Left cardiac atrium (tissue), 4 donors: ENCODE measurements at regions of chr16 and their contacts with region 1.

Region 1: GRCh38 chr16:84084570-84085270 is 32.0 kb downstream of the MBTPS1 start:
- DNase-seq: peak; percentile 50
- ATAC-seq: peak; percentile 30 to 39

Region 2: DNA sequence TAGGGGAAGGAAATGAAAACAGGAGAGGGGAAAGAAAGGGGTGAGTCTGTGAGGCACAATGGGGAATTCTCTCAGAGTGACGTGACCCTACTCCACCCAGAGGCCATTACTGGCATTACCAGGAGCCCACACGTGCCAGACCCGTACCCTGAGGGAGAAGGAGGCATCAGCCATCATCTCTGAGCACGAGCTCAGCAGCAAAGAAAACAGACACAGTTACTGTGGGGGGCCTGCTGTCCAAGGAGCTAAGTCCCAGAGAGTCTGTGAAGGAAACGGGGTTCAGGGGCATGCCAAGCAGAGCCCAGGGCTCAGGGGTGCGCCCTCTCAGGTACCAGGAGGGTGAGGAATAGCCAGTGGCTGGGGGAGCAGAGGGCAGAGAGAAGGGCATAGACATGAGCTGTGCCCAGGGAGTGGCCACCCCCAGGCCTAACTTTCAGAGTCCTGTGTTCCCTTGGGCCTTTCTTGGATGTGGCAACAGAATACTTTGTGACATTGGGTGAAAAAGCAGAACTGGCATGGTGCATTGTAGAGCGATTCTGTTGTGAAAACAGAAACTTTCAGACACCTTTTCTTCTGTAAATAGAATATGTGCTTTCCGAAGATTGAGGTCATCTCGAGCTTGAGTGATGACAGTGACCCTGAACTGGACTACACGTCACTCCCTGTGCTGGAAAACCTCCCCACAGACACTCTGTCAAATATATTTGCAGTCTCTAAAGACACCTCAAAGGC is 90.8 kb after region 1 on chr16:
- intact Hi-C with region 1: loop called in 1 of 2 experiments (anchors 5 kb)
- DNase-seq: peak; percentile 69
- ATAC-seq: peak; percentile 75 to 76